ENCODE measurements at regions of chr6 and their contacts with region 1.

Region 1: DNA sequence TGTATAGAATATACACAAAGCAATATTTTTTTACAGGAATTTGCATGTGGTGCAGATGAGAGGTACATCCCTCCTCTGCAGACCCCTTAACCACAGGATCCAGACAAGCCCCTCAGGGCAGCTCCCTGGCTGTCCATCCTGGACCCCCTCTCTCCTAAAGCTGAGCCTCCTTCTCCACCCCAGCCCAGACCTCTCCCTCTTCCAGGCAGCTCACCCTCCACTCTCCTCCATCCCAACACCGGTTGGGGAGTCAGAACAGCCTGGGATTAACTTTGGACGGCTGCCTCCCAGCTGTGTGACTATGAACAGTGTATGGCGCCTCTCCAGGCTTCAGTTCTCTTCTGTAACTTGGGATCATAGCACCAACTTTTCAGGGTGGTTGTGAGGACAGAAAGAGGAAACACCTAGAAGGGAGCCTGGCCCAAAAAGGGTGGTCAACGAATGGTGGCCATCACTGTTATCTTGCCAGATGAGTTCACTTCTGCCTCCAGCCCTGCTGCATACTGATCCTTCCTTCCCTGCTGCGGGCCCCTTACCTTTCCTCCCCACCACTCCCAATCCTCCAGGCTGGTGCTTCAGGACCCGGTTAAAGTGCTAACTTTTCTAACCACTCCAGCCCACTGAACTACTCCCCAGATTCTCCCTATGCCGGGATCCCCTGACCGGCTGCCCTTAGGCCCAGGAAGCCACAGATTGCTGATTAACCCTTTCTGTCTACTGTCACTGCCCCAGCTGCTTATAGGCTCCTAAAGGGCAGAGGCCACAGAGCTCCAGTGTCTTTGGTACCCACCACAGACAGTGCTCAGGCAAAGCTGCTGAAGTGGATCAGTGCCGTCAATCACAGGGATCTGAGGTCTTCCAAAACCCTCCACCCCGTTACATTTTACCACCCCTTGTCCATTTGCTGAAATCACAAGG is 55.9 kb downstream of the GPR6 start:
- DNase-seq: no peak
- H3K4me3 ChIP-seq: no peak overlapping the region
- H3K27ac ChIP-seq: no peak overlapping the region
- H3K4me1 ChIP-seq: no peaks in the 10 kb centered on the region
- H3K27me3 ChIP-seq: no peaks in the 10 kb centered on the region
- CTCF ChIP-seq: no peak
- EP300 ChIP-seq: no peak
- POLR2A ChIP-seq: no peak

Region 2: DNA sequence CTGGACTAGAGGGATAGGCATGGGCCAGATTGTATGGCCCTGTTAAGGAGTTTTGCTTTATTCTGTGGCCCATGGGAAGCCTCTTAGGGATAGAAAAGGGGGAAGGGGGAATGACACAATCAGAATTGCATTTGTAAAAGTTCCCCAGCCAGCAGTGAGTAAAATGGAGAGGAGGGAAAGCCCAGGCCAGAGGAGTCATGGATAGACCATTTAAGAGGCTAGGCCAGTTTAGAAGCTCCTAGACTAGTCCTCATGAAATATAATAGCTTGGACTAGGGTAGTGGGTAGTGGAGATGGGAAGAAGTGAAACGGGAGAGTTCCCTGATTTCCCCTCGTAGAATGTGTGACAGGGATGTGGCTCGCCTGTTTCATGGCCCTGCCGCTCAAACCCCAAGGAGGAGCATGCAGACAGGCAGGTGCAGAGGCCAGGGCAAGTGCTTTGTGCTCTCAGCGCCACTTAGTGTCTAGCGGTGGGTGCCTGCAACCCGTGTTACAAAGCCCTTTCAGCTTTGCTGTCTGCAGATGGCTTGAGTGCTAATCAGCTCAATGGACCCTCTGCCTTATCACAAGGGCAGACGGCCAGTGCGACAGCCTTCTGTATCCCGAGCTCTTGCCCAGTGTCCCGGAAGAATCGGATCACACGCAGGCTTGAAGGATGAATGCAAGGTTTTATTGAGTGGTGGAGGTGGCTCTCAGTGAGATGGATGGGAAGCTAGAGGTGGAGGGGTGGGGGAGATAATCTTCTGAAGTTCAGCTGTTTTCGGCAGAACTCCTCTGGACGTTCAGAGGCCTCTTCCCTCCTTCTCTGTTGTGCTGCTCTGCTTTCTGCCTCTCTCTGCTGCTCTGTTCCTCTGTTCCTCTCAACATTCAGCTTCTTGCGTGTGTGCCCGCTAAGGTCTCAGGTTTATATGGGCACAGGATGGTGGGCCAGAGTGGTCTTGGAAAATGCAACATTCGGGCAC is 797.6 kb before region 1 on chr6:
- intact Hi-C with region 1: loop called in 1 of 4 experiments (anchors 5 kb)
- DNase-seq: no peak
- H3K4me3 ChIP-seq: no peak overlapping the region
- H3K27ac ChIP-seq: no peak overlapping the region
- H3K4me1 ChIP-seq: no peaks in the 10 kb centered on the region
- H3K27me3 ChIP-seq: no peaks in the 10 kb centered on the region
- CTCF ChIP-seq: no peak
- EP300 ChIP-seq: no peak
- POLR2A ChIP-seq: no peak

Region 3: DNA sequence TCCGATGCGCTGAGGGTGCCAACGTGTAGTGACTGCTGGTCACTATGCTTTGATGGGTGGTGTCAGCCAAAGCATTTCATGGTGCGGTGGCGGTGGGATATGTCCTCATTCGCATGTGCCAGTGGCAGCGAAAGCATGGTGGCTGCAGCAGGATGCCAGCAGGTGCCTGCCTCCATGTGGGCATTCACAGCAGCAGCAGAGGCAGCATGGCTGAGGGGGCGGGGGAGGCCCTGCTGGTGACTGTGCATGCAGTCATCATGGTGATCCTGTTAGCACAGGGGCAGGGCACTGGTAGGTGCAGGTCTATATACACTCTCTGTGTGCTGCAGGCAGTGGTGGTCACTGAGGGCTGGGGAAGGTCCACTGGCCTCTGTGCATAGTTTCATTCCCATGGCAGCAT is 320.9 kb before region 1 on chr6:
- intact Hi-C with region 1: loop called (anchors 2 to 5 kb)
- DNase-seq: no peak
- H3K4me3 ChIP-seq: no peak overlapping the region
- H3K27ac ChIP-seq: no peak overlapping the region
- H3K4me1 ChIP-seq: peaks cover 2% of the 10 kb centered on the region
- H3K27me3 ChIP-seq: no peaks in the 10 kb centered on the region
- CTCF ChIP-seq: no peak
- EP300 ChIP-seq: no peak
- POLR2A ChIP-seq: no peak

Region 4: GRCh38 chr6:109998159-109998785 is 35.7 kb before region 1 on chr6:
- intact Hi-C with region 1: no loop called
- DNase-seq: no peak
- H3K4me3 ChIP-seq: no peak overlapping the region
- H3K27ac ChIP-seq: no peak overlapping the region
- H3K4me1 ChIP-seq: no peaks in the 10 kb centered on the region
- H3K27me3 ChIP-seq: no peaks in the 10 kb centered on the region
- CTCF ChIP-seq: no peak
- EP300 ChIP-seq: no peak
- POLR2A ChIP-seq: no peak

Measured in ovary (tissue), 10 donors.